ENCODE measurements at regions of chr21 and their contacts with region 1.

Region 1: DNA sequence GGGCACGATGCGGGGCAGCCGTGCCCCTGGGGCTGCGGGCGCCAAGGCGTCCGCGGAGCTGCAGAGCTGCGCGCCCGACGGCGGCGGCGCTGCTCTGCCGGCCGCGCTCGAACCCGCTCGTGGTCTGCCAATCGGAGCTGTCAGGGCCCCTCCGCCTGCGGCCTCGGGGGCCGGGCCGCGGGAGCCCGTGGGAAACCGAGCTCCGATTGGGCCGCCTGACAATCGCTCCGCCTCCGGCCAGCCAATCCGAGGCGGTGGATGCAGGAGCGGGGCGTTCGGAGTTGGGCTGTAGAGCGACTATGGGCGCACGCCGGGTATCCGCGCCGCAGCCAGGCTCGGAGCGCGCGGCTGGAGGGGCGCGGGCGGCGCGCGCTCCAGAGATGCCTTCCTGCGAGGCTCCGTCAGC is 100.5 kb upstream of the SOD1 start:
- DNase-seq: peak; percentile 81 to 95 (median 88)
- ATAC-seq: peak; percentile 85
- H3K4me3 ChIP-seq: peak overlapping the region; percentile 61
- H3K4me3 Mint-ChIP-seq: peak overlapping the region; percentile 90
- H3K27ac ChIP-seq: no peak overlapping the region
- H3K27ac Mint-ChIP-seq: peak overlapping the region; percentile 51
- H3K4me1 ChIP-seq: peaks cover 36% of the 10 kb centered on the region
- H3K4me1 Mint-ChIP-seq: peaks cover 43% of the 10 kb centered on the region
- H3K27me3 ChIP-seq: peaks cover 11 to 16% of the 10 kb centered on the region in 2 experiments
- H3K27me3 Mint-ChIP-seq: peaks cover 18% of the 10 kb centered on the region
- CTCF ChIP-seq: no peak

Region 2: DNA sequence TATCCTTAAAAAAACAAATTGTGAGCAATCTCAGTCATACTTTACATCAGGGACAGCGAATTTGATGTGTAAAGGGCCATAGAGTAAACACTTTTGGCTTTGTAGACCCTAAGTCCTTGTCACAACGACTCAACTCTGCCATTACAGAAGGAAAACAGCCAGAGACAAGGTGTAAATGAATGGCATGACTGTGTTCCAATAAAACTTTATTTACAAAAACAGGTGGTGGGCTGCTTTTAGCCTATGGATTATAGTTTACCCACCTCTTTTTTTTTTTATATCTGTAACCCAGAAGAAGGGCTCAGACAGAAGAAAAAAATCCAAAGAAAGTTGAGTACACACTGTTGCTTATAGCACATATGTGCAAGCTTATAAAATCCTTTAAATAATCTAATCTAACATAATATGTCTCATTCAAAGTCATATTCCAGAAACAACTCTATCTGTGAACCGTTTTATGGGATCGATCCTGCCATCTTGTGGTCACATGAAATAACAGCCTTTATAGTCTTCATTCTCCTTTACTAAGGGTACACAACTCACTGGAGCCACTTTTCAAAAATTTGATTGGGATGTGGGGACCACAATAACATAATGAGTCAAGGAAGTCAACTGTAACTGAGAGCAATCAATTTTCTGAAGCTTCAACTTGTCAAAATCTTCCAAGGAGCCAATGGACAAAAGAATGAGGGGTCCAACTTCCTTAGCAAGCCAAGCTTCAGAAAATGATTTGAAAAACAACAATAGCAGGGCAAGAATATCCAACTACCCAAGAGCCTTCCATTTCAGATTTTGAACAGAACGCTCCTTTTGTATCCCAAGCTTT is 378.5 kb before region 1 on chr21:
- CTCF ChIA-PET with region 1: interaction called, 4 read pairs
- POLR2A ChIA-PET with region 1: interaction called, 46 read pairs
- intact Hi-C with region 1: loop called in 1 of 2 experiments (anchors 5 kb)
- DNase-seq: peak in 4 of 14 experiments; percentile 53 to 78 (median 68)
- ATAC-seq: no peak
- H3K4me3 ChIP-seq: peak overlapping the region; percentile 46
- H3K4me3 Mint-ChIP-seq: peak overlapping the region; percentile 89
- H3K27ac ChIP-seq: peak overlapping the region; percentile 39 to 89
- H3K27ac Mint-ChIP-seq: peak overlapping the region; percentile 99
- H3K4me1 ChIP-seq: peaks cover 92% of the 10 kb centered on the region
- H3K4me1 Mint-ChIP-seq: peaks cover 79% of the 10 kb centered on the region
- H3K27me3 ChIP-seq: no peaks in the 10 kb centered on the region
- H3K27me3 Mint-ChIP-seq: no peaks in the 10 kb centered on the region
- CTCF ChIP-seq: peak; percentile 65

Region 3: DNA sequence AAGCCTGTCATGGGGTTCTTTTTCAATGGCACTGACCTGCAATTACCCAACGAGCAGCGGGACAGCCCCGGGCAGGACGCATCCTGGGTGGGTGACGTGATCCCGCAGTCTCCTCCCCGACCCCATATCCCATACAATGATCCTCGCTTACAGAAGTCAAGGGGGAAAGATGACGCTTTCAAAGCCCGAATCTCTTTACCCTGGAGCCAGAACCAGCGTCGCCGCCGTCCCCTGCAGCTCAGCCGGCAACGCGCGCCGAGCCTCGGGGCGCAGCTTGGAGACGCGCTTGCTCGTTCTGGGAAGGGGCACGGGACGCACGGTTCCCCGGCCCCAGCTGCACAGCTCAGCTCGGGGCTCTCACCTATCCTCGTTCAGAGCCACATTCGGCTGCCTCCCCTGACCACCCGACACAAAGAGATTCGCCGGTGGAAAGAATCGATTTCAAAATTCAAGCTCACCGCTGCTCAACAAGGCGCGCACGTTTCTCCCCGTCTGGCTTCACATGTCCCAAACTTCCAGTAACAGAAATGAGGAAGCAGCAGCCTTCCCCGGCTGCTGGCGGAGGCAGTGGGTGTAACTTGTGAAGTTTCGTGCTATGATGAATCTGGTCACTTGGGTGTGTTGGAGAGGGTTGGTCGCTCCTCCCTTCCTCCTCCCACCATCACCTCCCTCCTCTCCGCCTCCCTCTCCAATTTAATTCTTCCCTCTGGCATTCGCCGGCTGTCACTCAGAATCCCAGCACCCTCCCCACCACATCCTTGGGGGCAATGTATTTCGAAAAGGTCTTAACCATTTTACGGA is 215.1 kb before region 1 on chr21 and contains the start of gene TIAM1:
- CTCF ChIA-PET with region 1: no interaction called
- POLR2A ChIA-PET with region 1: interaction called, 3 read pairs
- intact Hi-C with region 1: loop called in 1 of 2 experiments (anchors 5 kb)
- DNase-seq: peak in 4 of 14 experiments; percentile 20 to 62 (median 38)
- ATAC-seq: no peak
- H3K4me3 ChIP-seq: peak within 1 kb of the TSS; percentile 64
- H3K4me3 Mint-ChIP-seq: peak within 1 kb of the TSS; percentile 91
- H3K27ac ChIP-seq: no peak within 1 kb of the TSS
- H3K27ac Mint-ChIP-seq: no peak within 1 kb of the TSS
- H3K4me1 ChIP-seq: peaks cover 21% of the 10 kb centered on the region
- H3K4me1 Mint-ChIP-seq: peaks cover 44% of the 10 kb centered on the region
- H3K27me3 ChIP-seq: peaks cover 16 to 22% of the 10 kb centered on the region in 2 experiments
- H3K27me3 Mint-ChIP-seq: peaks cover 56% of the 10 kb centered on the region
- CTCF ChIP-seq: no peak
- total RNA-seq, gene TIAM1: 39.6 to 39.8 TPM

Region 4: DNA sequence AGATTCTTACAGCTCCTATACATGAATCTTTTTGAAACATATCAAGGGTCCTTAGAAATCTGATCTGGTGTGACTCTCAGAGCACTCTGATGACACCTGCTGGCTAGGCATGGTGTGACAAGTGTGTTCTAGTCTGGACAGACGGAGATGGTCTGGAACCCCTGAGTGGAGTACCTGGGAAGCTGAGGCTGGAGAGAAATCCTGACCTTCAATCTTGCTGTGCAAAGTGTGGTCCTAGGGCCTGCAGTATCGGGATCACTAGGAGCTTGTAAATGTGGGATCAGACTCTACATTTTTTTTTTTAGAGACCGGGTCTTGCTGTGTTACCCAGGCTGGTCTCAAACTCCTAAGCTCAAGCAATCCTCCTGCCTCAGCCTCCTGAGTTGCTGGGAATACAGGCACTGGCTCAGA is 21.9 kb after region 1 on chr21:
- CTCF ChIA-PET with region 1: interaction called, 24 read pairs
- POLR2A ChIA-PET with region 1: interaction called, 7 read pairs
- intact Hi-C with region 1: no loop called
- DNase-seq: peak; percentile 58 to 85 (median 72)
- ATAC-seq: peak; percentile 96
- H3K4me3 ChIP-seq: no peak overlapping the region
- H3K4me3 Mint-ChIP-seq: no peak overlapping the region
- H3K27ac ChIP-seq: no peak overlapping the region
- H3K27ac Mint-ChIP-seq: no peak overlapping the region
- H3K4me1 ChIP-seq: peaks cover 4% of the 10 kb centered on the region
- H3K4me1 Mint-ChIP-seq: no peaks in the 10 kb centered on the region
- H3K27me3 ChIP-seq: no peaks in the 10 kb centered on the region
- H3K27me3 Mint-ChIP-seq: no peaks in the 10 kb centered on the region
- CTCF ChIP-seq: peak; percentile 88